OCI-LY7 (cell line): ENCODE measurements at regions of chr14 and their contacts with region 1.

Region 1: DNA sequence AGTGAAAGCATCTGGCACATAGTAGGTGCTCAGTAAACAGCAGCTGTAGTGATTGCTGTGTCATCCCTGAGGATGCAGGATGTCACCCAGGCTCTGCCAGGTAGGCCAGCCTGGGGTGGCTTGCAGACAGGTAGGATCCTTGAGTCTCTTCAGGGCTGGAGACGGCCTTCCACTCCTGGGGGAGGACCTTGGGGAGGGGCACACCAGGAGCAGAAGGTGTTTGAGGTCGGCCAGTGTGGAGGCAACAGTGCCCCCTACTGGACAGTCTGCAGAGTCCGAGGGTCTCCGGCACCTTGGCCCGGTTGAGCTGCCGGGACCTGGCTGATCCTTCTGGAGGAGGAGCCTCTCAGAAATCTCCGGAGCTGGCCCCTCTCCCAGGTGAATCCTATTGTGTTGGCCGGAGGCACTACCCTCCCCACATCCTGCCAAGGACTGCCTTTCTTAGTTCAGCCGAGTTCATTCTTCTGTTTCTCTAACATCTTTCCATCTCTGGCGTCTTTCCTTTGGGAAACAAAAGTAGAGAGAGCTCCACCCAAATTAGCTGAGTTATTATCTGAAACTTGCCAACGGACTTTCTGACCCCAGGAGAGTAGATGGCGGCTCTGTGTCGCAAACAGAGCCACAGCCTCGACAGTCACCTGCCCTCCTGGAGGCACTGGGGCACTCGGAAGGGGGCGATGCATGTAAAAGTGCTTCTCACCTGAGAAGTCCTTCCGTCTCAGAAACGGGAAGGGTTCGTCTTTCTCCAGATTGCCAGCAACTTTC is 41.8 kb upstream of the CLMN start:
- DNase-seq: peak; percentile 55
- H3K4me3 ChIP-seq: no peak overlapping the region
- H3K27ac ChIP-seq: no peak overlapping the region
- H3K4me1 ChIP-seq: no peaks in the 10 kb centered on the region
- CTCF ChIP-seq: peak; percentile 92

Region 2: DNA sequence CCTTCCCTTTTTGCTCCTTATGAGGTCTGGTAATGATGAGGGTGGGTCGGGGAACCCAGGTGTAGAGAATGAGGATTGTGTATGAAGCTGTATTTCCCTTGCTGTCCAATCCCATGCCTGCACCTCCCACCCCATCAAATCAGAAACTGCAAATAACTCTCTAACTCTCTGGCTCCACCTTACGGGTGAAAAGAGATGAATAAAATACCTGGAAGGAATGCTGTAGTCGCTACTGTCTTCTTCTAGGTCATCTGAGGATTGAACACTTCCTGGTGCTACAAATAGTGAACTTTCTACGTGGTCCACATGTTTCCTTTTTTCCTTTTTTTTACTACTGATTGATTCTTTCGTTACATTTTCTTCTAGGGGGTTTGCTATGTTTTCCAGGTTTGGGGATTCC is 165.3 kb before region 1 on chr14:
- CTCF ChIA-PET with region 1: no interaction called
- POLR2A ChIA-PET with region 1: no interaction called
- intact Hi-C with region 1: loop called (anchors 10 kb)
- DNase-seq: peak; percentile 51
- H3K4me3 ChIP-seq: no peak overlapping the region
- H3K27ac ChIP-seq: no peak overlapping the region
- H3K4me1 ChIP-seq: no peaks in the 10 kb centered on the region
- CTCF ChIP-seq: peak; percentile 82

Region 3: GRCh38 chr14:95229745-95230144 is 131.8 kb before region 1 on chr14:
- CTCF ChIA-PET with region 1: no interaction called
- POLR2A ChIA-PET with region 1: no interaction called
- intact Hi-C with region 1: loop called (anchors 1 kb)
- DNase-seq: peak; percentile 43
- H3K4me3 ChIP-seq: no peak overlapping the region
- H3K27ac ChIP-seq: no peak overlapping the region
- H3K4me1 ChIP-seq: peaks cover 11% of the 10 kb centered on the region
- CTCF ChIP-seq: peak; percentile 63